Mammary epithelial cell (primary cell): ENCODE measurements at regions of chr20 and their contacts with region 1.

Region 1: DNA sequence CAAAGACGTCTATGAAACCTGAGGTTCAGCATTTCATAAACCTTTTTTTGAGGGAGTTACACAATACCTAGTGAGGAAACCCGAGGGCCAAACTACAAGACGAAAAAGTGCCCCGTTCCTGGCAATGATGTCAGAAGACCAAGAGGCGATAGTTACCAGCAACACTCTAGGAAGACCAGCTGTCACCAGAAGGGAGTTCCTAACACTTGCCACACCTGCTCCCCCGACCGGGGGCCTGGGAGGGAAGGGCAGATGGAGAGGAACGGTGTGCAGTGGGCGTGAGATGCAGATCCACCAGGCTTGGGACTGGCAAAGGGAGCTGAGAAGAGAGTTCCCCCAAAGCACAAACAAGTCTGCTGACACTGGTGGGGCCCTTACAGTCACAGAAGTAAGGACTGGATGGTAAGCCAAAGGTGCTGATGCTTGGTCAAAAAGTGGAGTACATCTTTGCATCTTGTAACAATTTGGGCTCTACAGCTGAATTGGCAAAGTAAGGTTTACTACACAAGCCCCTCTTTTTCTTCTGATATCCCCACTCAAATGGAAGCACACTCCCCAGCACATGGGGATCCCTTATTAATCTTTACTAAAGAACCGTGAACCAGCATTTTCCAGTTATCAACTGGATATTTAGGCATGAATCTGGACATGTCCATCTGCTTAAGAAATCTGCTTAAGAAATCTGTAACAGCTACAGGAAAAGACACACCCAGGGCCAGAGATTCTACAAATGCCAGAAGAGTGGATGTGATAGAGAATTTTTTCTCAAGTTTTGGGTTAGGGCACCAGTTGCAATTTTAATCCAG is 38.5 kb downstream of the PANK2 start:
- DNase-seq: no peak
- H3K4me3 ChIP-seq: no peak overlapping the region
- H3K27ac ChIP-seq: no peak overlapping the region
- H3K4me1 ChIP-seq: peaks cover 18% of the 10 kb centered on the region
- H3K27me3 ChIP-seq: no peaks in the 10 kb centered on the region
- CTCF ChIP-seq: no peak

Region 2: GRCh38 chr20:3786665-3787323 is 140.9 kb before region 1 on chr20 and contains the start of gene CENPB:
- CTCF ChIA-PET with region 1: no interaction called
- dilution Hi-C with region 1: loop called (anchors 10 kb)
- in situ Hi-C with region 1: no loop called
- intact Hi-C with region 1: no loop called
- DNase-seq: peak; percentile 81
- H3K4me3 ChIP-seq: peak within 1 kb of the TSS; percentile 61 to 80 (median 79)
- H3K27ac ChIP-seq: peak within 1 kb of the TSS; percentile 2
- H3K4me1 ChIP-seq: peaks cover 30% of the 10 kb centered on the region
- H3K27me3 ChIP-seq: no peaks in the 10 kb centered on the region
- CTCF ChIP-seq: peak; percentile 60 to 64
- total RNA-seq, gene CENPB: 56.8 to 72.2 TPM

Region 3: DNA sequence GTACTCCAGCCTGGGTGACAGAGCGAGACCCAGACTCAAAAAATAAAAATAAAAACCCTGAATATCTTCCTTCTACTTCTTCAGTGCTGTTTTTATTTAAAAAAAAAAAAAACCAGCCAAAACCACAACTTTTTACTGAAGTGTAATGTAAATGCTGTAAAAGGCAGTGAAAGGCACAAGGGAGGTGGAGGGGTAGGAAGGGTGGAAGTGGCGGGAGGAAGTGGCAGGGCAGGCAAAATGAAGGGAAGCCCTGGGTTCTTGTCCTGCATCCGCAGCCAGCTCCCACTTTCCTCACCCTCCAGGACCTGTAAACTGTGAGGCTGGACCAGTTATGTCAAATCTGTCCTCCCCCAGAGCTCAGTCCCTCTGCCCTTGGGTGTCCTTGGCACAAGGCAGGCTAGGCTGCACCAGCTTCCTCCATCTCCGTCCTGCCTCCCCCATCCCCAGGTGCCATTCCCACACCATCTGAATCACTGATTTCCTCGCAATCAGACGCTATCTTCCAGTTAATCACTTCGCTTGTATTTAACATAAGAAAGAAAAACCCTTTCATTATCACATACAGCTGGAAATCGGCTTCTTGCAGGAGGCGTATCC is 52.2 kb before region 1 on chr20:
- CTCF ChIA-PET with region 1: no interaction called
- dilution Hi-C with region 1: loop called (anchors 5 kb)
- in situ Hi-C with region 1: no loop called
- intact Hi-C with region 1: no loop called
- DNase-seq: no peak
- H3K4me3 ChIP-seq: no peak overlapping the region
- H3K27ac ChIP-seq: no peak overlapping the region
- H3K4me1 ChIP-seq: no peaks in the 10 kb centered on the region
- H3K27me3 ChIP-seq: no peaks in the 10 kb centered on the region
- CTCF ChIP-seq: no peak

Region 4: DNA sequence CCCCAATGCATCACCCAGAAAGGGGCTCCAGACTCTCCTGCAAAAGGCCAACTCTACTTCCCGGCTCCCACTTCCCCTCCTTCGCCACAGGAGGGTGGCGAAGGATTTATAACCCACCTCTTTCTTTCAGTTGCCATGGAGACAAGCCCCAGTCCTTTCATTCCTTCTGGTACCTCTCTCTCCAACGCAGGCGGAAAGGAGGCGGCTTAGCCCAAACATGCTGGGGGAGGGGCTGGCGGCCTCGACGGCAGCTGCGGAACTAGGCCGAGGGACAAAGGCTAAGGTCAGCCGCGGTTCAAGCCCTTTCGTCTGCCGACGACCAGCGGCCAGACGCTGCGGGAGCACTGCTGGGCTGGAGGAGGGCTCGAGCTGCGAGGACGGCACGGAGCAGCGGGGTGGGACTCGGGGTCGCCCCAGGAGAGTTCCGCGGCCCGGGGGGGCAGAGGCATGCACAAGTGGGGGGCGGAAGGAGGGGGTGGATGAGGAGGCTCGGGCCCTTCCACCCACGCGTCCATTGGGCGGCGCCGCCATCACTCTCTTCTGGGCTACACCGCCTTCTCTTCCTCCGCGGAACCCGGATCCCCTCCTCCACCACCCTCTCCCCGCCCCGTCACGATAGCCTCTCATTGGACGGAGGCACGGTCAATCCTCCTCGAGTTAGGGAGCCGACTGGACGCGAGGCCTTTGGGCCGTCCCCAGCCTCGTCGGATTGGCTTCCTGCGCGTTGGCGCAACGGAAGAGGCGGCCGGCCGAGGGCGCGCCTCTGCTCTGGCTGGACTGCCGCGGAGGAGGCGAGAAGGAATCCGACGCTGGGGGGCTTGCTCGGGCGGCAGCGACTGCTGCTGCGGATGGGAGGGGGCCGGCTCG is 38.8 kb before region 1 on chr20 and contains the start of gene PANK2:
- CTCF ChIA-PET with region 1: no interaction called
- dilution Hi-C with region 1: no loop called
- in situ Hi-C with region 1: no loop called
- intact Hi-C with region 1: loop called (anchors 2 kb)
- DNase-seq: peak; percentile 99
- H3K4me3 ChIP-seq: peak within 1 kb of the TSS; percentile 87 to 97 (median 94)
- H3K27ac ChIP-seq: peak within 1 kb of the TSS; percentile 82
- H3K4me1 ChIP-seq: peaks cover 32% of the 10 kb centered on the region
- H3K27me3 ChIP-seq: no peaks in the 10 kb centered on the region
- CTCF ChIP-seq: peak; percentile 42
- total RNA-seq, gene PANK2: 41.0 to 45.0 TPM

Region 5: GRCh38 chr20:4006640-4007039 is 79.0 kb after region 1 on chr20:
- CTCF ChIA-PET with region 1: no interaction called
- dilution Hi-C with region 1: loop called (anchors 5 kb)
- in situ Hi-C with region 1: no loop called
- intact Hi-C with region 1: no loop called
- DNase-seq: no peak
- H3K4me3 ChIP-seq: no peak overlapping the region
- H3K27ac ChIP-seq: no peak overlapping the region
- H3K4me1 ChIP-seq: no peaks in the 10 kb centered on the region
- H3K27me3 ChIP-seq: no peaks in the 10 kb centered on the region
- CTCF ChIP-seq: no peak

Region 6: DNA sequence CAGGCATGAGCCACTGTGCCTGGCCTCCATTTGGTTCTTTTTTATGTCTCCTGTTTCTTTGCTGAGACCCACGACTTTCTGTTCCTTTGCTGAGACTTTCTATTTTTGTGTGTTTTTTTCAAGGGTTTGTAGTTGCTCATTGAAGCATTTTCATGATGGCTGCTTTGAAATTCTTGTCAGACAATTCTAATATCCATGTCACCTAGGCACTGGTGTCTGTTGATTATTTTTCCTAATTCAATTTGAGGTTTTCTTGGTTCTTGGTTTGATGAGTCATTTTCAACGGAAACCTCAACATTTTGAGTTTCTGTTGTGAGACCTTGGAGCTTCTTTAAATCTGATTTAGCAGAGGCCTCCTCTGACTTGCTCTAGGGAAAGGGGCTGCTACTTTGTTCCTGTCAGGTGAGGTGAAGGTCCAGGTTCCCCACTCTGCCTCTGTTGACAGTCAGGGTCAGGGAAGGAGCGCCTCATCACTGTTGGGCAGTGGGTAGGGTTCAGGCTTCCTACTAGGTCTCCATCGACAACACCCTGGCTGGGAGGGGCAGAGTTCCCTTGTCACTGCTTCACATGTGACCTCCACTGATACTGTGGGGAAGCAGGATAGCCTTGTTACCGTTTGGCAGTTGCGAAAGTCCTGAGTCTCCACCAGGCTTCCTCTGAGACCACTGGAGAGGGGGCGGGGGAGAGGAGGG is 154.9 kb after region 1 on chr20:
- CTCF ChIA-PET with region 1: no interaction called
- dilution Hi-C with region 1: loop called (anchors 5 kb)
- in situ Hi-C with region 1: no loop called
- intact Hi-C with region 1: loop called (anchors 5 kb)
- DNase-seq: peak; percentile 79
- H3K4me3 ChIP-seq: no peak overlapping the region
- H3K27ac ChIP-seq: peak overlapping the region; percentile 70
- H3K4me1 ChIP-seq: peaks cover 18% of the 10 kb centered on the region
- H3K27me3 ChIP-seq: no peaks in the 10 kb centered on the region
- CTCF ChIP-seq: no peak

Region 7: GRCh38 chr20:4091490-4092479 is 164.1 kb after region 1 on chr20:
- CTCF ChIA-PET with region 1: no interaction called
- dilution Hi-C with region 1: no loop called
- in situ Hi-C with region 1: no loop called
- intact Hi-C with region 1: loop called (anchors 5 kb)
- DNase-seq: peak; percentile 42
- H3K4me3 ChIP-seq: no peak overlapping the region
- H3K27ac ChIP-seq: no peak overlapping the region
- H3K4me1 ChIP-seq: no peaks in the 10 kb centered on the region
- H3K27me3 ChIP-seq: no peaks in the 10 kb centered on the region
- CTCF ChIP-seq: peak; percentile 77 to 86